PC-3 (cell line): ENCODE measurements at regions of chr2 and their contacts with region 1.

Region 1: DNA sequence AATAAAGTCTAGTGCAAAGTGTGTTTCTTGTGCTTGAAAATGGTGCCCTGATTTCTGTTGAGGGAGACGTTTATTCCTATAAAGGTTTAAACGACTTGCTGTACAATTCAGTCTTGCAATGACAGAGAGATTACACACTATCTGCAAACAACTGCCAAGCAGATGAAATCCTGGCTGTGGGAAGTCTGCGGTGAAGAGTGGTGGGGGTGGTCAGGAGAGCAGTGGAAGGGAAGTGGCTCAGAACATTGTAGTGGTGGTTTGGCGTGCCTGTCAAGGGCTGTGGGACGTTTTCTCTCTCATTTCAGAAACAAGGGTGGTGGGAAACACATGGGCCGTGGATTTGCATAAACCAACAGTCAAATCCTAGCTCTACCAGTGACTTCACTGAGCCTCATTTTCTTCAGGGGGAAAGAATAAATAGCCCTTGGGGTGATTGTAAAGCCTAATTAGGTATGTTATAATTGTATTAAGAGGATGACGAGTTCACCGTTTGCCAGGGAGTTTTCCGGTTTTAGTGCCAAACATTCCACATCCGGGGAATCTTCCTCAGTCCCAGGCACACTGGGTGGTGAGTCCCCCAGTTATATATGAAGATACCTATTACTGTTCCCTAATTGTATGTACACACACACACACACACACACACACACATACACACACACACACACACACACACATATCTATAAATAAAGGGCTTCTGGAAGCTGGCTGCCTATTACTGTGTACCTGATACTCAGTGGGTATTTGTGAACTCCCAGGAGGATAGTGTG is 115.0 kb downstream of the SPTBN1 start:
- DNase-seq: peak; percentile 95
- ATAC-seq: peak; percentile 76
- H3K4me3 ChIP-seq: peak overlapping the region; percentile 58
- H3K27ac ChIP-seq: peak overlapping the region; percentile 100
- H3K4me1 ChIP-seq: peaks cover 71% of the 10 kb centered on the region
- H3K27me3 ChIP-seq: no peaks in the 10 kb centered on the region
- CTCF ChIP-seq: no peak

Region 2: GRCh38 chr2:54522624-54523281 is 48.4 kb before region 1 on chr2:
- CTCF ChIA-PET with region 1: interaction called, 3 read pairs
- POLR2A ChIA-PET with region 1: no interaction called
- intact Hi-C with region 1: loop called (anchors 2 kb)
- DNase-seq: peak; percentile 88
- ATAC-seq: peak; percentile 79
- H3K4me3 ChIP-seq: no peak overlapping the region
- H3K27ac ChIP-seq: peak overlapping the region; percentile 28
- H3K4me1 ChIP-seq: peaks cover 35% of the 10 kb centered on the region
- H3K27me3 ChIP-seq: no peaks in the 10 kb centered on the region
- CTCF ChIP-seq: peak; percentile 79

Region 3: GRCh38 chr2:54545702-54546450 is 25.2 kb before region 1 on chr2:
- CTCF ChIA-PET with region 1: no interaction called
- POLR2A ChIA-PET with region 1: no interaction called
- intact Hi-C with region 1: loop called (anchors 1 kb)
- DNase-seq: peak; percentile 95
- ATAC-seq: peak; percentile 99
- H3K4me3 ChIP-seq: peak overlapping the region; percentile 22; the same call in 1 of the 2 replicates
- H3K27ac ChIP-seq: peak overlapping the region; percentile 89
- H3K4me1 ChIP-seq: peaks cover 28% of the 10 kb centered on the region
- H3K27me3 ChIP-seq: no peaks in the 10 kb centered on the region
- CTCF ChIP-seq: no peak

Region 4: GRCh38 chr2:54589340-54590215 is 18.5 kb after region 1 on chr2:
- CTCF ChIA-PET with region 1: no interaction called
- POLR2A ChIA-PET with region 1: no interaction called
- intact Hi-C with region 1: loop called (anchors 1 kb)
- DNase-seq: peak; percentile 67
- ATAC-seq: peak; percentile 58
- H3K4me3 ChIP-seq: peak overlapping the region; percentile 33; the same call in 1 of the 2 replicates
- H3K27ac ChIP-seq: peak overlapping the region; percentile 87
- H3K4me1 ChIP-seq: peaks cover 58% of the 10 kb centered on the region
- H3K27me3 ChIP-seq: no peaks in the 10 kb centered on the region
- CTCF ChIP-seq: no peak

Region 5: DNA sequence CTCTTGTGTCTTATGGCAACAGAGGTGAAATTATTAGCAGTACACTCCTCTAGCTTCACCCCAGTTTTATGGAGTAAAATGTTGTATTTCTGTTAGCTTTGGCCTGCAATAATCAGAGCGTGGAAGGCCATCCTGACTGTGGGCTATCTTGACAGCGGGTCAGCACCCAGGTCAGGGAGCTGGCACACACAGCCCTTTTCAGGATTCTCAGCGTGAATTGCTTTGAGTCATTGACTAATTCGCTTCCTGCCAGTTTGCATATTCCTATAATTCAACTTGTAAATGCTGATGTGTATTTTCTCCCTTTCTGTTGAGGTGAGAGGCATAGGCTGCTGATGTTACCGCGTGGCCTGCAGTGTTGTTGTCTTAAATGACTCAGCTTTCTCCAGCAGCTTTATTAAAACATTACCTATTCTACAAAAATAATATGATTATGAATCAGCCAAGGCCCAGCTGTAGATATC is 42.7 kb after region 1 on chr2:
- CTCF ChIA-PET with region 1: no interaction called
- POLR2A ChIA-PET with region 1: interaction called, 3 read pairs
- intact Hi-C with region 1: loop called (anchors 5 kb)
- DNase-seq: peak; percentile 75
- ATAC-seq: peak; percentile 91
- H3K4me3 ChIP-seq: 0 out of 2 replicates have a peak overlapping the region, but pooled peaks have one; percentile 3
- H3K27ac ChIP-seq: peak overlapping the region; percentile 89
- H3K4me1 ChIP-seq: peaks cover 28% of the 10 kb centered on the region
- H3K27me3 ChIP-seq: no peaks in the 10 kb centered on the region
- CTCF ChIP-seq: no peak

Region 6: GRCh38 chr2:55843096-55843993 is 1272.2 kb after region 1 on chr2:
- CTCF ChIA-PET with region 1: interaction called, 13 read pairs
- POLR2A ChIA-PET with region 1: no interaction called
- intact Hi-C with region 1: no loop called
- DNase-seq: peak; percentile 94
- ATAC-seq: peak; percentile 77
- H3K4me3 ChIP-seq: no peak overlapping the region; the same call in 1 of the 2 replicates
- H3K27ac ChIP-seq: peak overlapping the region; percentile 95
- H3K4me1 ChIP-seq: peaks cover 64% of the 10 kb centered on the region
- H3K27me3 ChIP-seq: no peaks in the 10 kb centered on the region
- CTCF ChIP-seq: no peak